Esophagus muscularis mucosa (tissue), 4 donors: ENCODE measurements at regions of chr18 and their contacts with region 1.

Region 1: GRCh38 chr18:74495581-74496507 is at the start of gene CNDP2:
- DNase-seq: peak; percentile 100
- H3K4me3 ChIP-seq: peak within 1 kb of the TSS; percentile 75 to 97 (median 86)
- H3K27ac ChIP-seq: peak within 1 kb of the TSS; percentile 82 to 94 (median 88)
- H3K4me1 ChIP-seq: peaks cover 19 to 35% (median 29%) of the 10 kb centered on the region in 4 donors
- H3K27me3 ChIP-seq: no peaks in the 10 kb centered on the region
- CTCF ChIP-seq: no peak
- EP300 ChIP-seq: no peak
- POLR2A ChIP-seq: peak; percentile 80
- total RNA-seq, gene CNDP2: 31.1 to 52.5 (median 42.9) TPM

Region 2: DNA sequence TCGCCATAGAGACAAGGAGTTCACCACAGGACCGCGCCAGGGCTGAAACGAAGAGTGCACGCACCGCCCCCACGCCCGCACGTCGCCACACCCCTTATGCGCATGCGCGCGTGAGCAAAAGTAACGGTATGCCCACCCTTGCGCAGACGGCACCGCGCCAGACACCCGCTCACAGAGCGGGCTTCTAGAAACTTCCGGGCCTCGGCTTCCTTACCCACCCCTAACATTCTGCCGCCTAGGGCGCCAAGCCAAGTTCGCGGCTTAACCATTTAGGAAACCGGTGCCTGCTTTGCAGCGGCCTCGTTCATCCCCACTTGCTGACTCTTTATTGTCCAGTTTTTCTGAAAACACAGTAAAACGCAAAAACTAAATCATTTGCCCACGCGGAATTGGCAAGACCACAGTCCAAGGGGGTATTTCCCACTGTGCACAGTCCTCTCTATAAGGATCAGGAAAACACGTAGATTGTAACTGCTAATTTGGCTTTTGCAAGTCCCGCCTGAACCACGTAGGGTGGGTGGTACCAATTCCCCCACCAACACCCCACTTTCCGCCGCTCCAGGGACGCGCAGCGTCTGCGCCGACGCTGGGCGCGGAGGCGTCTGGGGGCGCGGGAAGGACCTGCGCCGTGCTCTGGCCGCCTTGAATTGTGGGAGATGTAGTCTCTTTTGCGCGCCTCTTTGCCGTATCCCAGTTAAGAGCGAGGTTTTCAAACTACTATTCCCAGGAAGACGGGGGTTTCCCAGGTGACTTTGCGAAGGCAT is 347.9 kb before region 1 on chr18 and contains the starts of genes FBXO15 and TIMM21:
- intact Hi-C with region 1: loop called (anchors 5 kb)
- DNase-seq: peak; percentile 99
- H3K4me3 ChIP-seq: peak within 1 kb of the TSS; percentile 63 to 87 (median 80)
- H3K27ac ChIP-seq: peak within 1 kb of the TSS; percentile 93 to 96 (median 94)
- H3K4me1 ChIP-seq: peaks cover 35 to 58% (median 58%) of the 10 kb centered on the region in 4 donors
- H3K27me3 ChIP-seq: no peaks in the 10 kb centered on the region
- CTCF ChIP-seq: no peak
- EP300 ChIP-seq: no peak
- POLR2A ChIP-seq: peak; percentile 40
- total RNA-seq, gene FBXO15: 0.33 to 0.45 TPM in 2 of 4 donors, not detected in the others
- total RNA-seq, gene TIMM21: 39.7 to 55.6 (median 46.7) TPM

Region 3: DNA sequence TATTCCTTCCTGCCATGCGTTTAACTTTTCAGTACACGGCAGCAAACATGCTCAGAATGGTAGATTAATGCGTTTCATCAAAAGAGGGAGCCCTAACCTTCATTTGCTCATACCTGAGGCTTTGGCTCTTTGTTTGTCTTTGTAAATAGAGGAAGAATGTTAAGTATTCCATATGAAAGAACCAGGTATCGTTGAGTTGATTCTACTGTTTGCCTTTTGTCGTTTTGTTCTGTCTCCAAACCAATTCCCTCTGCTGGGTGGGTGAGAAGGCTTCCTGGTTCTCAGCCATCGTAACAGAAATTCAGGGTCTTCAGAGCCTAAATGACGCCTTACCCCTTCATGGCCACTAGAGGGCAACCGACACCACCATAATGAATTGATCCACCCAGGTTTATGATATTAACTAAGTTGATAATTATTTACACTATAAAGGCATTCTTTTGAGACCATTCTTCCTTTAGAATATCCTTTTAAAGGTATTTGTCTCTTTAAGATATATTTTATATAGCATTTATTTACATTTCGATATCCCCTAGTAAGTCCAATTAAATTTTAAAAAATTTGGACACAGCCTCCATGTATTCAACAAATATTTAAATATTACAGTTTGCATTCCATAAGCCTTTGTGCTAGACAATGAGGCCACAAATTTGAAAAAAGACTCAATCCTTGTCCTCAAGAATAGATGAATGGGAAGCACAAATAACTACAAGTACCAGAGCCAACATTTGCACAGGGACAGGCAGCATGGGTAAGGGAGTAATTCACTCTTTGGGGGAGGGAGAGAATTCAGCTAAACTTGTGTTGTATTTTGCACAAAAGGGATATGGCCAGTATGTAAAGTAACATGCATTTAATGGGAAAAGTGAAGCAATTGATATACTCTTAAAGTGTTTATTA is 299.4 kb before region 1 on chr18:
- intact Hi-C with region 1: loop called (anchors 10 kb)
- DNase-seq: no peak
- H3K4me3 ChIP-seq: peak overlapping the region in 2 of 4 donors; percentile 18 to 46
- H3K27ac ChIP-seq: no peak overlapping the region
- H3K4me1 ChIP-seq: peaks cover 0 to 6% (median 5%) of the 10 kb centered on the region in 4 donors
- H3K27me3 ChIP-seq: peaks cover 0 to 27% (median 0%) of the 10 kb centered on the region in 4 donors
- CTCF ChIP-seq: peak; percentile 88 to 92 (median 91)
- EP300 ChIP-seq: no peak
- POLR2A ChIP-seq: no peak

Region 4: DNA sequence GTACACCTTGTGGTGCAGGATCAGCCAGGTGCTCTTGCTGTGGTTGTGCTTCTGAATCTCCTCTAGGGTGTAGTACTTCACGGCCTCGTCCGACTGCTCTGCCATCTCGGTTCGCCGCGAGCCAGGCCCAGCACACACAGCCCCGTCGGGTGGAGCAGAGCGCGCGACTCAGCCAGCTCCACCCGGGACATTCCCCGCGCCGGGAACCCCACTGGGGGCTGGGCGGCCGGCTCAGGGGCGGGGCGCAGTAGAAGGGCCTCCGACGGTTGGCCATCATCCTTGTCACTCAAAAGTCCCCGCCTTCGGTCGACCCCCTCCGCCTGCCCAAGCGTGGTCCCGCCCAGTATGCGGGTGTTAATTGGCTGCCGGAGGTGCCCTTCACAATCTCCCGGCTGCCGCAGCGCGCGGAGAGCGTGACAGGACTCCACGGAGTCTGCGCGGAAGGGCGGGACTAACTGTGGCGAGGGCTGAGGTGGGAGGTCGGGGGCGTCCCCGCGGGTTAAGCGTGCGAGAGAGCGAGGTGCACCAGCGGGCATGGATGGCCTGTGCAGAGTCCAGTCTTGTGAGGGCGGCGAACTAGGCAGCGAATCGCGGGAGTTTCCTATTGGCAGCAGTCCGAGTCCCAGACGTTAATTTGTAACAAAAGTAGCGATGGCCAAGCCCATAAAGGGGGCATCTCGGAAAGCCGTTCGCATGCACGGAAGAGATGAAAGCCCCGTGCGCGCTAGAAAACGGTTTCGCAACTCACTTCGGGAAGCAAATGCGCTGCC is 203.9 kb before region 1 on chr18 and contains the start of gene CYB5A:
- intact Hi-C with region 1: loop called (anchors 5 kb)
- DNase-seq: peak; percentile 99
- H3K4me3 ChIP-seq: peak within 1 kb of the TSS; percentile 65 to 99 (median 82)
- H3K27ac ChIP-seq: peak within 1 kb of the TSS; percentile 60 to 80 (median 72)
- H3K4me1 ChIP-seq: peaks cover 24 to 41% (median 38%) of the 10 kb centered on the region in 4 donors
- H3K27me3 ChIP-seq: no peaks in the 10 kb centered on the region
- CTCF ChIP-seq: peak in 1 of 3 experiments; percentile 17
- EP300 ChIP-seq: no peak
- POLR2A ChIP-seq: no peak
- total RNA-seq, gene CYB5A: 77.7 to 99.4 (median 81.5) TPM

Region 5: DNA sequence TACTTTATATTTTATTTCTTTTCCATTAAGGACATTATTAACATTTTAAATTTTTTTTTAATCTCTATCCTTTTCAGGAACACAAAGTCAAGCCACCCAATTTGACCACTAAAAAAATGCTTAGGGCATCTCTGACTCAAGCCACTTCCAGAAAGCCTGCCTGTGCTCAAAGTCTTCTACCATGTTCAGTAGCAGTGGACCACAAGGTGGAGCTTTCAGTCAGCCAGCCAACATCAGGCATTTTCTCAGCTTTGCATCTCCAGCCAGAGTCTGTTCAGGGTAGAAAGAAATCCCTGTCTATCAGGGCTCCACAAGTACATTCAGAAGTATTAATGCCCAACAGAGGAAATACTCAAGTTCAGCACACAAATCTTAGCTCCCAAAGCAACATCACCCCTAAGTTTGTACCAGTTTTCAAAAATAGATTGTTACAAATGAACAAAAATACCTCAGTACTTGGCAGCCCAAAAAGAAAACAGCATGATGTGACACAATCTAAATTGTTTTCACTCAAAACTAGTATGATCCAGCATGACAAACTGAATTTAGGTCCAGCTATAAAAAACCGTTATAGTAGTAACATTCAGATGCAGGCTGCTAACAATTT is 142.6 kb before region 1 on chr18:
- intact Hi-C with region 1: loop called (anchors 5 kb)
- DNase-seq: no peak
- H3K4me3 ChIP-seq: no peak overlapping the region
- H3K27ac ChIP-seq: no peak overlapping the region
- H3K4me1 ChIP-seq: peaks cover 0 to 3% (median 0%) of the 10 kb centered on the region in 4 donors
- H3K27me3 ChIP-seq: no peaks in the 10 kb centered on the region
- CTCF ChIP-seq: peak; percentile 67 to 71 (median 68)
- EP300 ChIP-seq: no peak
- POLR2A ChIP-seq: no peak

Region 6: GRCh38 chr18:74589811-74590210 is 94.0 kb after region 1 on chr18:
- intact Hi-C with region 1: loop called (anchors 5 kb)
- DNase-seq: no peak
- H3K4me3 ChIP-seq: no peak overlapping the region
- H3K27ac ChIP-seq: no peak overlapping the region
- H3K4me1 ChIP-seq: peaks cover 0 to 3% (median 2%) of the 10 kb centered on the region in 4 donors
- H3K27me3 ChIP-seq: peaks cover 0 to 5% (median 0%) of the 10 kb centered on the region in 4 donors
- CTCF ChIP-seq: no peak
- EP300 ChIP-seq: no peak
- POLR2A ChIP-seq: no peak